ENCODE measurements at regions of chr1 and their contacts with region 1.

Region 1: DNA sequence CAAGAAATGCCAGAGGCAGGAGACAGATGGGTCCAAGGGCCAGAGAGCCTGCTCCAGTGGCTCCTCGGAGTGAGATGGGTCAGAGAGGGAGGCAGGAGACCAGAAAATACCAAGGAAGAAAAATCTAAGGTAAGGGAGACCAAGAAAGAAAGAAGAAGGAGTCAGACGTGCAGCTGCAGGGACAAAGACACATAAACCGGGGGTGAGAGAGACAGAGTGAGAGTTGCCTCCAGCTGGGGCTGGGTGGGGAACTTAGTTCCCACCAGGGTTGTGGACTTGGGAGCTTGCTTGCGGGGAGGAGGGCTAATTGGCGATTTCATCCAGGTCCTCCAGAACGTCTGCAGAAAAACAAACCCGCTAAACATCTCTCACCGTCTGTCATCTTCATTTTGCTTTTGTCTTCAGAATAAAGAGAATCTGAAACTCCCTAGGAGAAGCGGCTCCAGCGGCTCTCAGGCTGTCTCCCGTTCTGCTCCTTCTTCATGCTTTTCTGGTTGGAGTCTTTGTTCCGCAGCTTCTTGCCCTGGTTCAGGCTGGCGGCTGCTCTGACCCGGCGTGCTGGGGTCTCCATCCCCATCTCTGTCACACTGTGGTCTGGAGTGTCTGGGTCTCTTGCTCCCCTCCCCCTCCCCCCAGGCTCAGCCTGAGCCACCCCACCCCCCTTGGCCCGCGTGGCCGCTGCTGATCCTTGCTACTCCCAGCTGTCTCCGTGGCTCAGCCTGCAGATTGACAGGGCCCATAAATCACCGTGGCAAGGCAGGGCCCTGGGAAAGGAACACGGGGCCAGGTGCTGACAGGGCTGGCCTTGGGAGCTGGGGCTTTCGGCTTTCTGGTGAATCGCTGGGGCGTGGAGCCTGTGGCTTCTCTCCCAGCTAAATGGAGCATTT is 66.6 kb downstream of the UBIAD1 start:
- DNase-seq: peak in 1 of 2 donors; percentile 58
- H3K4me3 ChIP-seq: no peak overlapping the region
- H3K27ac ChIP-seq: no peak overlapping the region
- H3K4me1 ChIP-seq: peaks cover 0 to 3% of the 10 kb centered on the region in 2 donors
- H3K27me3 ChIP-seq: no peaks in the 10 kb centered on the region
- CTCF ChIP-seq: no peak
- POLR2A ChIP-seq: no peak

Region 2: GRCh38 chr1:10867138-10867721 is 472.4 kb before region 1 on chr1:
- intact Hi-C with region 1: no loop called
- DNase-seq: peak; percentile 58 to 61
- H3K4me3 ChIP-seq: no peak overlapping the region
- H3K27ac ChIP-seq: no peak overlapping the region
- H3K4me1 ChIP-seq: peaks cover 4 to 11% of the 10 kb centered on the region in 2 donors
- H3K27me3 ChIP-seq: no peaks in the 10 kb centered on the region
- CTCF ChIP-seq: peak in 5 of 6 experiments; percentile 51 to 94 (median 84)
- POLR2A ChIP-seq: no peak

Region 3: DNA sequence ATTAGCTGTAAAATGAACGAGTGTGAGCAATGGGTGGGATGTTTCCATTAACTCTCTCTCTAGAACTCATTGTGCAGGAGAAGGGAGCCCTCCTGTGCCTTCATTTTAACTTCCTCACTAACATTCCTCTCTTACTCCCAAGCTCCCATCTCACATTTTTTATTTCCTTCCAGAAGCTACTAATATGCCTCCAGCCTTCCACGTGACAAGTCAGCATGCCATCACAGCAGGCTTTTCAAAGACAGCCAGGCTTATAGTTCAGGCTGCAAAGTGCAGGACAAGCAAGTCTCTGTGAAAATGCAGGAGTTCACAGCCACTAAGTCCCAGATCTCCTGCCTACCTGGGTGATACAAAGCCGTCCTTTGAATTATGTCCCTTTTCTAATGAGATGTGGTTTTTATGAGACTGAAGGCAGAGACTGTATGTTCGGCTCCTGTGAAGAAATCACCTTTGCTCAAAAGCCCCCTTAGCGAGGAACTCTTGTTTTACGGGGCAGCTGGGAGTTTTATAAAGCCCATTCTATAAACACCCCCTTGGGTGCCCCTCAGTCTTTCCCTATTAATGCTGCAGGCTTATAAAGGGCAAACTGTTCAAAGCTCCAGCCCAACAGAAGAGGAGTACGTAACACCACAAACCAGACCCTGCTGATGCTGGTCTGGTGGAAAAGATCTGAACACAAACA is 165.2 kb before region 1 on chr1:
- intact Hi-C with region 1: no loop called
- DNase-seq: no peak
- H3K4me3 ChIP-seq: no peak overlapping the region
- H3K27ac ChIP-seq: no peak overlapping the region
- H3K4me1 ChIP-seq: peaks cover 0 to 14% of the 10 kb centered on the region in 2 donors
- H3K27me3 ChIP-seq: no peaks in the 10 kb centered on the region
- CTCF ChIP-seq: no peak
- POLR2A ChIP-seq: no peak

Region 4: DNA sequence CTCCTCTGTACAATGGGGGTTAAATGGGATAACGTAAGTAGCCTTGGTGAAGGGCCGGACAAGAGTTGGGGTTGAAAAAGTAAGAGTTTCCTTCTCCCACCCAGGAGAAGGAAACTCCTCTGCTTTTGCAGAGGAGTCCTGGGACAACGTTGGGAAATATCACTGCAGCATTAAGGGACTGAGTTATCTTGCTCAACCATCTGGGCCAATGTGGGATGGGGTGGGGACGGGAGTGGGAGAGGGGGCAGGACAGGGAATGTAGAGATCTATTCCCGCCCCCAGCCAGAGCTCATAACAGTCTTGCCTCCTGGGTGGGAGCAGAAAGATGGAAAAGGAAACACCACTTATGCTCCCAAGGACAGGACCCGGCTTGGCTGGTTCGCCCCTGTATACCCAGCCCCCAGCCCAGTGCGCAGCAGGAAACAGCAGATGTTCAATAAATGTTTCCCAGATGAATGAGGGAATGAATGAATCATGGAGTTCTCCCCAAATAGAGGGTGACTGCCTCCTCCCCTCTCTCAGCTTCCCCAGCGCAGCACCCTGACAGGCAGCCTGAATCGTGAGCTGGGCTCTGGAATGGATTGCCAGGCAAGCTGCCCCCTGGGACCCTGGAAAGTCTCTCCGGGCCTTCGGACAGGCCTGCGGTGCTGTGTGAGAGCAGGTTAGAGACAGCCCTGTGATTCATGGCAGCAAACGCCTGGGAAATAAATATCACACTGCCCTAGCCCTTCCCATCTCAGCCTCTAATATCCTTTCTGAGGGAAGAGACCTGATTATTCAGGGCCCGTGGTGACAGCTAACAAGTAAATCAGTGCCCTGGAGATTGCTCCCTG is 289.8 kb after region 1 on chr1:
- intact Hi-C with region 1: loop called (anchors 10 kb)
- DNase-seq: no peak
- H3K4me3 ChIP-seq: no peak overlapping the region
- H3K27ac ChIP-seq: no peak overlapping the region
- H3K4me1 ChIP-seq: no peaks in the 10 kb centered on the region
- H3K27me3 ChIP-seq: no peaks in the 10 kb centered on the region
- CTCF ChIP-seq: no peak
- POLR2A ChIP-seq: no peak

Region 5: DNA sequence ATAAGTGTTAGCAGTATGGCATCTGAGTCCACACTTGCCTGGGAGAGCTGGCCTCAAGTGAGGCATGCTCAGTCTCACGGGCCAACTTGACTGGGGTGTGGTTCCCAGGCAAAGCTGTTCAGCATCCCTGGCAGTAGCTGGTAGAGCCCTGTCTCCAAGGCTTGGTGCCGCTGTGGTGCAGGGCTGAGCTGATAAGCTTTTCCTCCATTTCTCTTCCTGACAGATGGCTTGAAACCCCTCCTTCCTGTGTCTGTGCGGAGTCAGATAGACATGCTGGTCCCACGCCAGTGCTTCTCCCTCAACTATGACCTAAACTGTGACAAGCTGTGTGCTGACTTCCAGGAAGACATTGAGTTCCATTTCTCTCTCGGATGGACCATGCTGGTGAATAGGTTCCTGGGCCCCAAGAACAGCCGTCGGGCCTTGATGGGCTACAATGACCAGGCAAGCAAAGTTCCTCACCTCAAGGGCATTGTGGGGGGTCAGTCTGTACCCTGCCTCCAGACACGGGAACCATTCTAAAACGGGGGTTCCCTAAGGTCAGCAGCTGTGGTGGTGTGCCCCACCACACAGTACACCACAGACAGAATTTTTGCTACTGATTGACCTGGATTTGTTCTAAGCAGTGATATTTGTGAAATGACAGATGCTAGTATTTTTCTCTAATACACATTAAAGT is 666.0 kb after region 1 on chr1:
- intact Hi-C with region 1: no loop called
- DNase-seq: peak in 1 of 2 donors; percentile 10
- H3K4me3 ChIP-seq: no peak overlapping the region
- H3K27ac ChIP-seq: peak overlapping the region; percentile 56 to 95 (median 70)
- H3K4me1 ChIP-seq: peaks cover 14 to 50% of the 10 kb centered on the region in 2 donors
- H3K27me3 ChIP-seq: no peaks in the 10 kb centered on the region
- CTCF ChIP-seq: no peak
- POLR2A ChIP-seq: no peak

Measured in thyroid gland (tissue), 4 donors.